Testis (tissue), 5 donors: ENCODE measurements at regions of chr15 and their contacts with region 1.

Region 1: GRCh38 chr15:69141286-69141701 is 19.1 kb upstream of the GLCE start:
- DNase-seq: no peak
- H3K4me3 ChIP-seq: no peak overlapping the region
- H3K27ac ChIP-seq: no peak overlapping the region
- H3K4me1 ChIP-seq: no peaks in the 10 kb centered on the region
- H3K27me3 ChIP-seq: no peaks in the 10 kb centered on the region
- CTCF ChIP-seq: no peak
- POLR2A ChIP-seq: no peak

Region 2: GRCh38 chr15:68316061-68316804 is 825.1 kb before region 1 on chr15:
- intact Hi-C with region 1: loop called (anchors 10 kb)
- DNase-seq: no peak
- H3K4me3 ChIP-seq: no peak overlapping the region
- H3K27ac ChIP-seq: no peak overlapping the region
- H3K4me1 ChIP-seq: peaks cover under 1% of the 10 kb centered on the region
- H3K27me3 ChIP-seq: no peaks in the 10 kb centered on the region
- CTCF ChIP-seq: no peak
- POLR2A ChIP-seq: no peak

Region 3: GRCh38 chr15:68833700-68834331 is 307.5 kb before region 1 on chr15:
- intact Hi-C with region 1: no loop called
- DNase-seq: no peak
- H3K4me3 ChIP-seq: no peak overlapping the region
- H3K27ac ChIP-seq: no peak overlapping the region
- H3K4me1 ChIP-seq: no peaks in the 10 kb centered on the region
- H3K27me3 ChIP-seq: no peaks in the 10 kb centered on the region
- CTCF ChIP-seq: no peak
- POLR2A ChIP-seq: no peak

Region 4: DNA sequence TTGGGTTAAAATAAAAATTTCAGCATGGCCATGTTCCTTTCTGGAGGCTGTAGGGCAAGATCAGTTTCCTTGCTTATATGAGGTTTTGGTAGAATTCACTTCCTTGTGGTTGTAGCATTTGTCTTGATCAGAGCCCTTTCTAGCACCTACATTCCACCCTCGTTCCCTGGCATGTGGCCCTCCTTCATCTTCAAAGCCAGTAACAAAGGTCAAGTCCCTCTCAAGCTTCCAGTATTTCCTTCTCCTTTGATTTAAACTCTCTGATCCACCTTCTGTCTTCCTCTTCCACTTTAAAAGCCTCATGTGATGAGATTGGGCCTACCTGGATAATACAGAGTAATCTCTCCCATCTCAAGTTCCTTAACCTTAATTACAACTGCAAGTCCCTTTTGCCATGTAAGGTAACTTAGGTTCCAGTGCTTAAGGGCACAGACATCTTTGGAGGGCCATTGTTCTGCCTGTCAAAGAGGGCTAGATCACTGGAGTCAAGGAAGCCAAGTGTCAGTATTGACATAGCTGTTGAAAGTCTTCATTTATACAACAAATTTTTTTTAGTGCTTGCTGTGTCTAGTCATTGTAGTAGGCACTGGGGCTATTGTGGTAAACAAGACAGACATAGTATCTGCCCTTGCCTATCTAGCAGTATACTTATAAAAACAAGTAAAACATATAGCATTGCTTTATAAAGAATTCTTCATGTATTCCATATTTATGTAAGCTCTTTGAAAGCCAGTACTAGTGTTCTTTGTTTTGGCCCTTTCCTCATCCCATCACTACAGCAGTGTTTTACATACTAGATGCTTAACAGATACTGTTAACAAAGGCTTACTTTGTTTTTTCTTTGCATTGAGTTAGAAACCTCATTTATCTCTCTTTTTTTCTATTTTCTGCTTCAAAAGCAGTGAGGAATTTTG is 59.8 kb after region 1 on chr15:
- intact Hi-C with region 1: no loop called
- DNase-seq: no peak
- H3K4me3 ChIP-seq: no peak overlapping the region
- H3K27ac ChIP-seq: no peak overlapping the region
- H3K4me1 ChIP-seq: no peaks in the 10 kb centered on the region
- H3K27me3 ChIP-seq: no peaks in the 10 kb centered on the region
- CTCF ChIP-seq: no peak
- POLR2A ChIP-seq: no peak